A673 (cell line): ENCODE measurements at regions of chr1 and their contacts with region 1.

Region 1: DNA sequence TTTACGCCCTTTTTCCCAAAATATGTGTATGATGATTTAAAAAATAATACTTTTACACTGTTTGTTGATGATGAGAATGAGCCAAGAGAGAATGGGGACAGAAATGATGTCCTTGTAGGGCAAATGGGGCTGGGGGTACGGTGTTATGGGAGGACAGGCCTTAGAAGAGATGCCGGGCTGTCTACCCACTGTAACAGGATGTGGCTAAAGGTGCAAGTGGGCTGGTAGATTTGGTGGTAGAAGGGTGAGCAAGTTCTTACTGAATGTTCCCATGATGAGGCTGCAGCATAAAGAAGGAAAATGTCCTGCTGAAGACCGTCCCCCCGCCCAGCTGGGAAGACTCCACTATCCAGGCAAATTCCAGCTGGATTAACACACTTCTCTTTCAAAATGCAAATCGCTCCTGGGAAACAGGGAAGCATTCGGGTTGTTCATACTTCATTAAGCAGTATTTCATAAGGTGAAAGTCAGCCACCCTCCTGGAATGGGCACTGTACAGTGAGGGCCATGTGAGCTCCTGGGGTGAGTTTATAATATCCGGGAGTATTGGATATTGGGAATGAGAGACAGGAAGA is 14.0 kb downstream of the GPA33 start:
- DNase-seq: no peak
- H3K4me3 ChIP-seq: no peak overlapping the region
- H3K27ac ChIP-seq: no peak overlapping the region
- H3K4me1 ChIP-seq: no peaks in the 10 kb centered on the region
- H3K27me3 ChIP-seq: peaks cover 12% of the 10 kb centered on the region
- CTCF ChIP-seq: no peak

Region 2: GRCh38 chr1:167090314-167090942 is 14.2 kb after region 1 on chr1 and contains the start of gene GPA33:
- CTCF ChIA-PET with region 1: interaction called, 25 read pairs
- POLR2A ChIA-PET with region 1: no interaction called
- intact Hi-C with region 1: no loop called
- DNase-seq: no peak
- H3K4me3 ChIP-seq: no peak within 1 kb of the TSS
- H3K27ac ChIP-seq: no peak within 1 kb of the TSS
- H3K4me1 ChIP-seq: peaks cover 6% of the 10 kb centered on the region
- H3K27me3 ChIP-seq: no peaks in the 10 kb centered on the region
- CTCF ChIP-seq: no peak
- total RNA-seq, gene GPA33: not detected in 2 replicates